CD4-positive, alpha-beta T cell (primary cell): ENCODE measurements at regions of chr17 and their contacts with region 1.

Region 1: GRCh38 chr17:51914577-51914976 is 243.9 kb downstream of the CA10 start:
- DNase-seq: no peak
- ATAC-seq: no peak
- H3K4me3 ChIP-seq: no peak overlapping the region
- H3K4me3 Mint-ChIP-seq: no peak overlapping the region
- H3K27ac ChIP-seq: no peak overlapping the region
- H3K27ac Mint-ChIP-seq: no peak overlapping the region
- H3K4me1 ChIP-seq: no peaks in the 10 kb centered on the region
- H3K4me1 Mint-ChIP-seq: no peaks in the 10 kb centered on the region
- H3K27me3 ChIP-seq: no peaks in the 10 kb centered on the region
- H3K27me3 Mint-ChIP-seq: peaks cover 9% of the 10 kb centered on the region
- CTCF ChIP-seq: no peak

Region 2: DNA sequence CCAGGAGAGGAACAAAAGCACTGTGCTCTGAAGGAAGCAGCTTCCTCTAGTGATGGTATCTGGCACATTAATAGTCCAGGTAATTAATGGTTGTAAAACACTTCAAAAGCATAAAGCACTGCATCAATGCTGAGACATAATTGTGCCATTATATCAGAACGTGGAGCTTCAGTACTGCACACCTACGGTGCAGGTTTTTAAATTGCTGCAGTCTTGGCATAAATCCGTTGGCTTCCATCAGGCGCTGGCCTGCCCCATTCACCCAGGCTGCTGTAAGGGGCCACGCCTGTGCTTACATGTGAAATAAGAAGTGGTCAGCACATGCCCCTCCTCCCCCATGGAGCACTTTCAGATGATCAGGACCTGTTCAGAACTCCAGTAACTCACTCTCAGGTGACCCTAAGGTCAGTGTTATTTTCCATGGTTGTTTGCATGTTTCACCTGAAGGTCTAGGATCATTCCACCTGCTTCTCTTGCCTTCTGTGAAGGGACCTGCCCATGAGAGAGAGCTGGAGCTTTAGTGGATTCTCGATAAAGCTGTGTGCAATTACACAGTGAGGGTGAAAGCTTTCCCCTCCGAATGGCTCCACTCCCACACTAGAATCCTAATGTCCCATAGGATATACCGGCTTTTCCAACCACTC is 101.3 kb before region 1 on chr17:
- CTCF ChIA-PET with region 1: no interaction called
- POLR2A ChIA-PET with region 1: no interaction called
- intact Hi-C with region 1: no loop called
- DNase-seq: no peak
- ATAC-seq: no peak
- H3K4me3 ChIP-seq: no peak overlapping the region
- H3K4me3 Mint-ChIP-seq: no peak overlapping the region
- H3K27ac ChIP-seq: no peak overlapping the region
- H3K27ac Mint-ChIP-seq: no peak overlapping the region
- H3K4me1 ChIP-seq: no peaks in the 10 kb centered on the region
- H3K4me1 Mint-ChIP-seq: no peaks in the 10 kb centered on the region
- H3K27me3 ChIP-seq: peaks cover 0 to 3% of the 10 kb centered on the region in 2 experiments
- H3K27me3 Mint-ChIP-seq: peaks cover 14% of the 10 kb centered on the region
- CTCF ChIP-seq: no peak

Region 3: DNA sequence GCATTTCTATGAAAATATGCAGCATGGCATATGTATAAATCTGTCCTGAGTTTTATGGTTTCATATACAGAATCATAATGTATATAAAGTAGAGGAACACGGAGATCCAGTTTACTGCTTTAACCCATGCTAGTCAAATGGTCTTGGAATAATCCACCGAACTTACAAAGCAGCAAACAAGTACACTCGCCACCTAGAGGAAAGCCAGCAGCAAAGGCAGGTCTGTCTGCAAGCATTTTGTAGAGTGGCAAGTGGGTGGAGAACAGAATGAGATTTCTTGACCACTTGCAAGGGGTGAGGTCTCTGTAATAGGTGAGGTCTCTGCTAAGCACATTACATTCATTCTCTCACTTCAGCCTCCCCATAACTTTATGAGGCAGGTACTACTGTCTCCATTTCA is 64.4 kb before region 1 on chr17:
- CTCF ChIA-PET with region 1: no interaction called
- POLR2A ChIA-PET with region 1: no interaction called
- intact Hi-C with region 1: loop called in 1 of 2 experiments (anchors 10 kb)
- DNase-seq: no peak
- ATAC-seq: no peak
- H3K4me3 ChIP-seq: no peak overlapping the region
- H3K4me3 Mint-ChIP-seq: no peak overlapping the region
- H3K27ac ChIP-seq: no peak overlapping the region
- H3K27ac Mint-ChIP-seq: no peak overlapping the region
- H3K4me1 ChIP-seq: no peaks in the 10 kb centered on the region
- H3K4me1 Mint-ChIP-seq: no peaks in the 10 kb centered on the region
- H3K27me3 ChIP-seq: peaks cover 2 to 6% of the 10 kb centered on the region in 2 experiments
- H3K27me3 Mint-ChIP-seq: peaks cover 18% of the 10 kb centered on the region
- CTCF ChIP-seq: no peak

Region 4: DNA sequence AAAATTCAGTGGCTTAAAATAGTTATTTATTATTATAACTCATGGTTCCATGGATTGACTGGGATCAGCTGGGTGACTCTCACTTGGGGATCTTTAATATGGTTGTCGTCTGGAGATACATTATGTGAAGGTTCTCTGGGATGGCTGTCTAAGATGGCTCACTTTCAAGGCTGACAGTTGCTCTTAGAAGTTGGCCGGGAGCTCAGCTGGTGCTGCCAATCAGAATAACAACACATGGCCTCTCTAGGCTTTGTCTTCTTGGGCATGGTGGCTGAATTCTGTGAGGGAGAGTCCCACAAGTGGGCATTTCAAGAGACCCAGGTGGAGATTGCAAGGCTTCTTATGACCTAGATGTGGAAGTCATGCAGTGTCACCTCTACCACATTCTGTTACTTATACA is 25.8 kb before region 1 on chr17:
- CTCF ChIA-PET with region 1: no interaction called
- POLR2A ChIA-PET with region 1: no interaction called
- intact Hi-C with region 1: no loop called
- DNase-seq: no peak
- ATAC-seq: no peak
- H3K4me3 ChIP-seq: no peak overlapping the region
- H3K4me3 Mint-ChIP-seq: no peak overlapping the region
- H3K27ac ChIP-seq: no peak overlapping the region
- H3K27ac Mint-ChIP-seq: no peak overlapping the region
- H3K4me1 ChIP-seq: no peaks in the 10 kb centered on the region
- H3K4me1 Mint-ChIP-seq: no peaks in the 10 kb centered on the region
- H3K27me3 ChIP-seq: no peaks in the 10 kb centered on the region
- H3K27me3 Mint-ChIP-seq: peaks cover 12% of the 10 kb centered on the region
- CTCF ChIP-seq: no peak